ENCODE measurements at regions of chr17 and their contacts with region 1.

Region 1: DNA sequence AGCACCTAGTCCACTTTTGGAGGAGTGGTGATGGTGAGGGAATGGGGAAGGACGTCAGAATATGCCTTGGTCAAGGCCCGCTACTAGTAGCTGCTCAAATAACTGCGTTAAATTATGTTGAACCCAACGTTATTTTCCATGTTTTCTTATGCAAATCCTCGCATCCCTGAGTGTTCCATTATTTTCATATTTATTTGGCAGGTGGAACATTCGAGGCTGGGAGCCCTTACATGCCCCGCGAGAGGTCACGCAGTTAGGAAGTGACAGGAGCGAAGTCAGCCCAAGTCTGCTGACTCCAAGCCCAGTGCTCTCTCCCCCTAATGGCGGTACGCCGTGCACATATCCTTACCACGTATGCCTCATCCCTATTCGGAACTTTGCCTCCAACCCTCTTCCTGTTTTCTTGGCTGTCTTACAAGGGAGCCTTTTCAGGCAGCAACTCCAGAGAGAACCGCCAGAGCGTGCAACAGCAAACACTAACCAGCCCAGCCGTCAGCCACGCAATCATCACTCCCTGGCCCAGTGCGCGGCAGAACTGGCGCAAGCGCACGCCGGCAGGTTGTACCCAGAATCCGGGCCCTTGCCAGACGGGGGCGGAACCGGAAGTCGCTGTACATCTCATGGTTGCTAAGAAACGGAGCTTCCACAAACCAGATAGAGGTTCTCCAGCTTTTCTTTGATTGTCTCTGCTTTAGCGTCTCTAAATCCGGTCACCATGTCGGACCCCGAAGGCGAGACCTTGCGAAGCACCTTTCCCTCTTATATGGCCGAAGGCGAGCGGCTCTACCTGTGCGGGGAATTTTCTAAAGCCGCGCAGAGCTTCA is at the start of gene ODAD4:
- DNase-seq: peak; percentile 98
- H3K4me3 Mint-ChIP-seq: peak within 1 kb of the TSS; percentile 94
- H3K27ac Mint-ChIP-seq: peak within 1 kb of the TSS; percentile 93
- H3K4me1 Mint-ChIP-seq: peaks cover 13% of the 10 kb centered on the region
- H3K27me3 Mint-ChIP-seq: no peaks in the 10 kb centered on the region
- total RNA-seq, gene ODAD4: 0.77 to 1.4 TPM

Region 2: GRCh38 chr17:41918314-41919164 is 11.7 kb before region 1 on chr17 and contains the start of gene ACLY:
- CTCF ChIA-PET with region 1: interaction called, 9 read pairs
- POLR2A ChIA-PET with region 1: interaction called, 25 read pairs
- intact Hi-C with region 1: loop called (anchors 1 kb)
- DNase-seq: peak; percentile 98
- H3K4me3 Mint-ChIP-seq: peak within 1 kb of the TSS; percentile 95
- H3K27ac Mint-ChIP-seq: peak within 1 kb of the TSS; percentile 86
- H3K4me1 Mint-ChIP-seq: peaks cover 35% of the 10 kb centered on the region
- H3K27me3 Mint-ChIP-seq: no peaks in the 10 kb centered on the region
- total RNA-seq, gene ACLY: 186 to 203 TPM

Region 3: DNA sequence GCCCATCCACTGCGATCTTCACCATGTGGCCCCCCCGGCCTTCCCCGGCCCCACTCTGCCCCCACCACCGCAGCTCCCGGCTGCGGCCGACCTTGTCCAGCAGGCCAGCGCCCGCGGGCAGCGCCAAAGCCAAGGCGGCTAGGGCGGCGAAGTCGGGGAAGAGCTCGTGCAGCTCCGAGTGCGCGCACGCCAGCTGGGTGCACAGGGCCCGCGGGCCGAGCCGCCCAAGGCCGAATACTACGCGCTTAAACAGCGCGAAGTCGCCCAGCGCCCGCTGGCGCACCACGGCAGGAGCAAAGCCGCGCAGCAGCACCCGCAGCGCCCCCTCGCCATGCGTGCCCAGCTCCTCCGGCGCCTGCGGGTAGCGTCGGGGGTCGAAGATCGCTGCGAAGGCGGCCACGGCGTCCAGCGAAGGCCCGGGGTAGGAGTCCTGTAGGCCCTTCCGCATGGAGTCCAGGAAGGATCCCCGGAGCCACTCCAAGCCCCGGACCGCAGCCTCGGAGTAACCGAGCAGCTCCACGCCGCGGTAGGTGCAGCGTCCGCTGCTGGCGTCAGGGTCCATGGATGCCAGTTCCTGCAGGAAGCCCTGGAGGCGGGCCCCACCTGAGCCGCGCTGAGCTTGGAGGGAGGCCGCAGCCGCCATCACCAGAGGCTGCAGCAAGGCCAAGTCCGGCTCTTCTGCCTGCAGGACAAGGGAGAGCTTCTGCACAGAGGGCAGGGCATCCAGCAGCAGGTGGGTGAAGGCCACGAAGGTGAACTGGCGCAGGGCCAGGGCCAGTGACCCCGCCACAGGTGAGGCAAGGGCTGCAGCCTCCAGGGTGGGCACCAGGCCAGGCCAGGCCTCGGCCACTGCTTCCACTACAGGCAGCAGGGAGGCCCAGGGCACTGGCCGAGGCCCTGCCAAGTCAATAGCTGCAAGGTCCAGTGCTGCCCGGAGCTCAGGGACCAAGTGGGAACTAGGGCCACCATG is 109.9 kb after region 1 on chr17:
- CTCF ChIA-PET with region 1: no interaction called
- POLR2A ChIA-PET with region 1: no interaction called
- intact Hi-C with region 1: no loop called
- DNase-seq: no peak
- H3K4me3 Mint-ChIP-seq: no peak overlapping the region
- H3K27ac Mint-ChIP-seq: no peak overlapping the region
- H3K4me1 Mint-ChIP-seq: no peaks in the 10 kb centered on the region
- H3K27me3 Mint-ChIP-seq: peaks cover 14% of the 10 kb centered on the region